SK-N-SH (cell line): ENCODE measurements at regions of chr9 and their contacts with region 1.

Region 1: DNA sequence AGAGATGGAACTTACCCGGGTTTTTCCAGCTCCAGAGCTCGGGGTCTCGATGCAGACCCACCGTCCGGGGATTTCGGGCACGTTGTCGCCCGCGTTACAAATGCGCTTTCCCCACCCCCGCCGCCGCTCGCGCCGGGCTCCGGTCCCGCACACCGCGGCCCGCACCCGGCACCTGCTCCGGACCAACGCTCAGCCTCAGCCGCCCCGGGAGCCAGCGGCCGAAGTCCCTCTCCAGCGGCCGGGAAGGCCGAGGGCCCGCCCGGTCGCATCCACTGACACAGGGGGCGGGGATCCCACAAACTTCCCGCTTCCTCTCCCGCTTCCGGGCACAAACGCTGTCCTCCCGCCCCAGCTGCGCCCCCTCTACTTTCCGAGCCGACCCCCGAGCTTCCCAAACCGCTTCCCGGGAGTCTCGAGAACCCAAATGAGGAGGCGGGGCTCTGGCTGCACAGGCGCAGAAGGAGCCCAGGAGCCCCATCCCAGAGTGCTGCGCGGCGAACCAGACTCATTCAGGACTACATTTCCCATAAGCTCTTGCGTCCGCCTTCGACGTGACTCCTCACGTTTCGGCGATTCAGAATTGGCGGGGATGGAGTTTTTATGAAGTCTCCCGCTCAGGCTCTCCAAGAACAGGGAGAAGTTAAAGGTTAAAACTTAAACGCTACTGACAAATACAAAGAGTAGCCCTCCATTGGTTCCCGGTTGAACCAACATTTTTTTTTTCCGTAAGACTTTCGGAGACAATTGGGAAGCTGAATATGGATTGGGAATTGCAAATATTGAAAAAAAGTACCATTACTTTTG is at the start of gene ZNF782:
- DNase-seq: peak; percentile 94
- H3K4me3 ChIP-seq: peak within 1 kb of the TSS; percentile 65 to 85
- H3K27ac ChIP-seq: peak within 1 kb of the TSS in 1 of 2 experiments; percentile 36; a peak in 3 of 4 replicates
- H3K4me1 ChIP-seq: peaks cover 14 to 15% of the 10 kb centered on the region in 2 experiments
- H3K27me3 ChIP-seq: no peaks in the 10 kb centered on the region
- CTCF ChIP-seq: no peak
- EP300 ChIP-seq: no peak
- RAD21 ChIP-seq: no peak
- polyA plus RNA-seq, gene ZNF782: 1.3 TPM in 2 replicates

Region 2: GRCh38 chr9:96867079-96867804 is 13.0 kb after region 1 on chr9:
- CTCF ChIA-PET with region 1: interaction called, 44 read pairs
- POLR2A ChIA-PET with region 1: no interaction called
- DNase-seq: no peak
- H3K4me3 ChIP-seq: no peak overlapping the region
- H3K27ac ChIP-seq: no peak overlapping the region
- H3K4me1 ChIP-seq: no peaks in the 10 kb centered on the region
- H3K27me3 ChIP-seq: no peaks in the 10 kb centered on the region
- CTCF ChIP-seq: no peak
- EP300 ChIP-seq: no peak
- RAD21 ChIP-seq: no peak

Region 3: DNA sequence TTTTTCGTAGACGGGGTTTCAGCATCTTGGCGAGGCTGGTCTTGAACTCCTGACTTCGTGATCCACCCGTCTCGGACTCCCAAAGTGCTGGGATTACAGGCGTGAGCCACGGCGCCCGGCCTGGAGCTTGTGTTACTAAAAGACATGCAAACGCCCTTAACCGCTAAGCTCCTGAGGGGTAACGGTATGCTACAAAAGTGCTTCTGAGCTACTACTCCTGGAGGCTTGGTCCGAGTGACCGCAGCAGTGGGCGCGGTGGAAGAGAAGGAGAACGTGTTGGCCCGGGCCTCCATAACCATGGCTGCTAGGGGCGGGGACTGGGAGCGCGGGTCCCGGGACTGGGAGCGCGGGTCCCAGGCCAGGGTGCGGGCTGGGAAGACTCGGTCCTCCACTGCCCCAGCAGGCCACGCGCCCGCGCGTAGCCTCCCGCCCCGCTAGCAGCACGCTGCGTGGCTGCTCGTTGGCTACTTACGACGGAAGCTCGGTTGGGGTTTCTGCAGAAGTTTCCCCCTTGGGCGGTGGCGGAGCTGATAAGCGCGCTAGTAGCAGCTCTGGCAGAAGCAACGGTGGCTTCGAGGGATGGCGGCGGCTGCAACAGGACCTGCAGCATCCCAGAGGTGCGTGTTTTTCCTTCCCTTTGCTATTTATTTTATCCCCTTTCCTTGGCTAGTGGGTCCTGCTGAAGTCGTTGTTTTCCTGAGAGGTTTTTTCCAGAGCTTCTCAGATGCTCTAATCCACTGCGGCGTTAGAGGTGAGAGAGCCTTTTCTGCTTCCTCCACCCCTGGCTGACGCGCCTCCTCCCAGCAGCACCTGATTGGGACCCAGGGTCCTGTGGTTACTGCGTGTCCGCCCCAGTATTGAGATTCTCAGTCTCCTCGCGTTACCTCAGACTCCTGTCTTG is 383.9 kb after region 1 on chr9:
- CTCF ChIA-PET with region 1: interaction called, 19 read pairs
- POLR2A ChIA-PET with region 1: no interaction called
- DNase-seq: peak; percentile 91
- H3K4me3 ChIP-seq: peak overlapping the region; percentile 58 to 79
- H3K27ac ChIP-seq: peak overlapping the region; percentile 72 to 93
- H3K4me1 ChIP-seq: peaks cover 0 to 4% of the 10 kb centered on the region in 2 experiments; a peak in 2 of 4 replicates
- H3K27me3 ChIP-seq: no peaks in the 10 kb centered on the region
- CTCF ChIP-seq: no peak
- EP300 ChIP-seq: no peak
- RAD21 ChIP-seq: 0 out of 2 replicates have a peak, but pooled peaks have one; percentile 4

Region 4: GRCh38 chr9:97398999-97399758 is 544.9 kb after region 1 on chr9:
- CTCF ChIA-PET with region 1: interaction called, 134 read pairs
- POLR2A ChIA-PET with region 1: no interaction called
- DNase-seq: peak; percentile 82
- H3K4me3 ChIP-seq: peak overlapping the region in 1 of 2 experiments; percentile 36; a peak in 1 of 4 replicates
- H3K27ac ChIP-seq: no peak overlapping the region
- H3K4me1 ChIP-seq: peaks cover 3 to 4% of the 10 kb centered on the region in 2 experiments; a peak in 1 of 4 replicates
- H3K27me3 ChIP-seq: no peaks in the 10 kb centered on the region
- CTCF ChIP-seq: peak; percentile 88
- EP300 ChIP-seq: no peak
- RAD21 ChIP-seq: peak; percentile 82

Region 5: DNA sequence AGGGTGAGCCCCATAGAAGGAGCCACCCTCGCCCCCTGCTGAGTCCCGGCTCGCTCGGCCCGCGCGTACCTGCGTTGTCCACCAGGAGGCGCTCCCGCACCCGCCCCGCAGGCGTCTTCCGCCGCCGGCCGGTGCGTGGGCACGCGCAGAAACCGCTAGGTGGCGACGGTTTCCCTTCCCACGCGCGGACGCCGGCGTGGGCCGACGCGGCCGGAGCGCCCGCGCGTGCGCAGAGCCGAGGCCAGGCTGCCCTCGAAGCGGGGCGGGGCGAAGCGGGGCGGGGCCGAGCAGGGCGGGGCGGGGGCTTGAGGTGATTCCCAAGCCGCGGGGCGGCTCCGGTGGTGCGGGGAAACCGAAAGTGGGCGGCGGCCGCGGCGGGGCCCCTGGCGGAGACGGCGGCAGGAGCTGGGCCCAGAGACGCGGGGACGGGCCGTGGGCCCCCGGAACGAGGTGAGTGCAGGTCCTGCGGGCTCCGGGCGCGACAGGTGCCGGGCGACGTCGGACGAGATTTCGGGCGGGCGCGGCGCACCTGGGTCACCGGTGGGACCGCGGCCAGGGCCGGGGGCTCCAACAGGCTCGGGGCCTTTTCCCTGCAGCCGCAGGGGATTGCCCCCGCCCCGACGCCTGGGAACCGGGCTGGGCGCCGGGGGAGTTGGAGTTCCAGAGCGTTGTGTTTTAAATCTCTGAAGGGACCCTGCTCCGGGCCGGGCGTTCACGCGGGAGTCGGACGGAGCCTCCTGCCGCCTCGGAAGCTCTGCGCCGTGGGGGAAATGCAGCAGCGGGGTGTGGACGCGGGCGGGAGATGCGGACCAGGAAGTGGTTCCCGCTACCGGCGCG is 557.7 kb after region 1 on chr9 and contains the start of gene TDRD7:
- CTCF ChIA-PET with region 1: interaction called, 17 read pairs
- POLR2A ChIA-PET with region 1: no interaction called
- DNase-seq: peak; percentile 98
- H3K4me3 ChIP-seq: peak within 1 kb of the TSS; percentile 79 to 94
- H3K27ac ChIP-seq: peak within 1 kb of the TSS in 1 of 2 experiments; percentile 11; a peak in 2 of 4 replicates
- H3K4me1 ChIP-seq: peaks cover 8 to 13% of the 10 kb centered on the region in 2 experiments; a peak in 3 of 4 replicates
- H3K27me3 ChIP-seq: no peaks in the 10 kb centered on the region
- CTCF ChIP-seq: peak; percentile 93
- EP300 ChIP-seq: no peak; a peak in 1 of 4 replicates
- RAD21 ChIP-seq: peak; percentile 65
- polyA plus RNA-seq, gene TDRD7: 4.9 and 5.8 TPM in 2 replicates